AG04450 (cell line): ENCODE measurements at regions of chr2 and their contacts with region 1.

Region 1: GRCh38 chr2:161063157-161063954 is 96.9 kb upstream of the TANK start:
- DNase-seq: peak; percentile 67
- H3K4me3 ChIP-seq: no peak overlapping the region; the same call in 1 of the 2 replicates
- H3K27ac ChIP-seq: no peak overlapping the region
- H3K27me3 ChIP-seq: no peaks in the 10 kb centered on the region
- CTCF ChIP-seq: peak; percentile 95

Region 2: DNA sequence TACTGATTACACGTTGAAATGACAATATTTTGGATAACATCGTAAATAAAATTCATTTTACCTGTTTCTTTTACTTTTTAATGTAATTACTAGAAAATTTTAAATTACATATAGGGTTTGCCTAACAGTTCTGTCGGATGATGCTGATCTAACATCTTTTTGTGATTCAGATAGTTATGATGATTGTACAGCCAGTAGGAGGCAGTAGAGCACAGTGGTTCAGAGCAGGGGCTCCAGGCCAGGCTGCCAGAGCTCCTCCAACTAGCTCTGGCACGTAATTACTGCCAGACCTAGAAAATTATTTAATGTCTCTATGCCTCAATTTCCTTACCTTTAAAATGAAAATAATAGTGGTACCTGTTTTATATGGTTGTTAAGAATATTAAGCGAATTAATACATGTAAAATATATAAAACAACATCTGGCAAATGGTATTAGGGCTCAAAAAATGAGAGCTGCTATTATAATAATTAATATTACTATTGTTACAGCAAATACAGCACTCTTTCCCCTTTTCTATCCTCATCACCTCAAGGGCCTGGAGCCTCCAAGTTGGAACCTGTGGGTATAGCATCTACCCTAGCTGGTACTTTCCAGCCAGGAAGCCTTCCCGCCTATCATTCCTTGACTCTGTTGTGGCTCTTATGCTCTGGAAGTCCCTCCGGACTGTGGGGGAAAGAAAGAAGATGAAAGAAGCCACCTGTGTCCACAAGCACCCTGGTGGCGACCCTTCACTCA is 953.3 kb before region 1 on chr2:
- CTCF ChIA-PET with region 1: interaction called, 22 read pairs
- POLR2A ChIA-PET with region 1: no interaction called
- DNase-seq: peak; percentile 57
- H3K4me3 ChIP-seq: no peak overlapping the region
- H3K27ac ChIP-seq: no peak overlapping the region
- H3K27me3 ChIP-seq: no peaks in the 10 kb centered on the region
- CTCF ChIP-seq: peak; percentile 79

Region 3: DNA sequence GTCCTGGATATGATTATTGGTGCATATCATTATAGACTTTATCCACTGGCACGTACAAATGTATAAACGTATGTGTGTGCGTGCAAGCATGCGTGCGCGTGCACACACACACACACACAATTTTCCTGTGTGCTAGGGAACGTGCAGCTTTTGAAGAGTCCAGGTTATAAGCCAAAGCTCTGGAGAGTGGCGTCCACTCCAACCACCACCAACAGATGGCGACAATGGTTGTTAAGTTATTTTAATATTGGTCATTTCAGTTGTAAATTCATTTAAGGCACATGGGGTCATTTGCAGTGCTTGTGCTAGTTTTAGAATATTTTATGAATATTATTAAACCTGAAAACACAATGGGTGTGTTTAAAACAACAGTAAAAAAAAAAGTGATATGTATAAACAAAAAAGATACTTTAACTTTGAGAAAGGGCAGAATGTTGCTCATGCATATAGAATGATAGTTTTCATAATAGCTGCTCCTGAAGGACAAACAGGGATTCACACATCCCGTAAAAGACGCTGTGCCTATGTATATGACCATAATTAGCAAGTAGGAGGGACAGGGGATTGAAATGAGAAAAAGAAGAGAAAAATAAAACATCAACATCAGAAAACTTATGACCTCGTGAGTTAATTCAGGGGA is 739.1 kb before region 1 on chr2:
- CTCF ChIA-PET with region 1: interaction called, 12 read pairs
- POLR2A ChIA-PET with region 1: no interaction called
- DNase-seq: no peak
- H3K4me3 ChIP-seq: no peak overlapping the region
- H3K27ac ChIP-seq: no peak overlapping the region
- H3K27me3 ChIP-seq: no peaks in the 10 kb centered on the region
- CTCF ChIP-seq: peak; percentile 78

Region 4: GRCh38 chr2:160994141-160995002 is 69.0 kb before region 1 on chr2:
- CTCF ChIA-PET with region 1: interaction called, 69 read pairs
- POLR2A ChIA-PET with region 1: interaction called, 3 read pairs
- DNase-seq: peak; percentile 76
- H3K4me3 ChIP-seq: no peak overlapping the region
- H3K27ac ChIP-seq: no peak overlapping the region
- H3K27me3 ChIP-seq: no peaks in the 10 kb centered on the region
- CTCF ChIP-seq: peak; percentile 78

Region 5: GRCh38 chr2:161033059-161033660 is 30.2 kb before region 1 on chr2:
- CTCF ChIA-PET with region 1: interaction called, 10 read pairs
- POLR2A ChIA-PET with region 1: interaction called, 9 read pairs
- DNase-seq: no peak
- H3K4me3 ChIP-seq: no peak overlapping the region
- H3K27ac ChIP-seq: no peak overlapping the region
- H3K27me3 ChIP-seq: no peaks in the 10 kb centered on the region
- CTCF ChIP-seq: no peak

Region 6: DNA sequence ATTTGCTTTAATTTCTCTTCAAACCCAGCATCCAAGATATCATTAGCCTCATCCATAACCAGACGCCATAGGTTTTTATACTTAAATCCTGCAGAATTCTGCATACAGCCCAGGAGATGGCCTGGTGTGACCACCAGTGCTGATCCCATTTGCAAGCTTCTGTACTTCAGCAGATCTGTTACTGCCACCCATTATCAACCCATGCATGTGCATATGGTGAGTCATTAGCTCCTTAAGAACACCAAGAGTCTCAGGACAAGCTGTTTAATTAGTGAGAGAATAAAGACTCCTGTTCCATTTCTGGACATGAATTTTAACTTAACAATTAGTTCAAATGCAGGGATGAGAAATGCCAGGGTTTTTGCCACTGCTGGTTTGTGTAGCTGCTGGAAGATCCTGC is 13.8 kb before region 1 on chr2:
- CTCF ChIA-PET with region 1: interaction called, 40 read pairs
- POLR2A ChIA-PET with region 1: no interaction called
- DNase-seq: no peak
- H3K4me3 ChIP-seq: no peak overlapping the region
- H3K27ac ChIP-seq: no peak overlapping the region
- H3K27me3 ChIP-seq: no peaks in the 10 kb centered on the region
- CTCF ChIP-seq: no peak

Region 7: DNA sequence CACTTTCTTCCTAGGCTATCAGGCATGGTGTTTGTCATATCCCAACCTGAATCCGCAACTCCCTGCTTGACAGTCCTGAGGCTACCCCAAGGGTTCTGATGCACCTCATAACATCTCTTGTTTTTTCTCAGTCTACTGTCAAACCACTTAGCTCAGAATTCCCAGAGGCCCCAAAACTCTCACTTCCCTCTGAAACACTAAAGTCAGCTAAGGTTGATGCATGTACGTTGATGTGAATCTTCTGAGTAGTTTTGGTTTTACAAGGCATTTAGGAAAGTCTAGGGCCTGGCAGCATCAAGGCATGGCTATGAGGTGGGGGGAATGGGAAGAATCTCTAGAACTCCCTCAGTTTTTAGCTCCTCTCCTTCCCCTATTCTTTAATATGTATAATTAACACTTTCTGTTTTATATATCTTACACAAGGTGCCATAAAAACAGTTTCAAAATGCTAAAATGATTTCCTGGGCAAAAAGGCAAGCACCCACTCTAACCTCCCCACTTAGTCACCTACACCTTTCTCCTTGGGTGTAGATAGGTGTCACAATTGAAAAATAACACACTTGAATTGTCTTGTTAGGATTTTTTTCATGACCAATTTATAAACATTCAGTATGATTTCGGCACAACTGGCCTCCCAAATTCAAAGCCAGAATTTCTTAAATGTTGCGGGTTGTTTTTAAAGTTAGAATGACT is 25.4 kb after region 1 on chr2:
- CTCF ChIA-PET with region 1: interaction called, 15 read pairs
- POLR2A ChIA-PET with region 1: no interaction called
- DNase-seq: no peak
- H3K4me3 ChIP-seq: no peak overlapping the region
- H3K27ac ChIP-seq: no peak overlapping the region
- H3K27me3 ChIP-seq: no peaks in the 10 kb centered on the region
- CTCF ChIP-seq: no peak